ENCODE measurements at regions of chr12 and their contacts with region 1.

Region 1: GRCh38 chr12:111812881-111813741 is 28.9 kb upstream of the MAPKAPK5 start:
- DNase-seq: peak; percentile 82
- H3K4me3 Mint-ChIP-seq: no peak overlapping the region
- H3K27ac Mint-ChIP-seq: no peak overlapping the region
- H3K4me1 Mint-ChIP-seq: peaks cover 6% of the 10 kb centered on the region
- H3K27me3 Mint-ChIP-seq: no peaks in the 10 kb centered on the region

Region 2: GRCh38 chr12:110039085-110039807 is 1773.9 kb before region 1 on chr12:
- CTCF ChIA-PET with region 1: no interaction called
- intact Hi-C with region 1: no loop called
- DNase-seq: peak; percentile 69
- H3K4me3 Mint-ChIP-seq: no peak overlapping the region
- H3K27ac Mint-ChIP-seq: peak overlapping the region; percentile 89
- H3K4me1 Mint-ChIP-seq: peaks cover 38% of the 10 kb centered on the region
- H3K27me3 Mint-ChIP-seq: no peaks in the 10 kb centered on the region

Region 3: GRCh38 chr12:111330800-111331752 is 482.0 kb before region 1 on chr12:
- CTCF ChIA-PET with region 1: interaction called, 3 read pairs
- intact Hi-C with region 1: loop called (anchors 1 kb)
- DNase-seq: no peak
- H3K4me3 Mint-ChIP-seq: no peak overlapping the region
- H3K27ac Mint-ChIP-seq: no peak overlapping the region
- H3K4me1 Mint-ChIP-seq: peaks cover 3% of the 10 kb centered on the region
- H3K27me3 Mint-ChIP-seq: no peaks in the 10 kb centered on the region

Region 4: GRCh38 chr12:111685744-111686517 is 127.2 kb before region 1 on chr12 and contains the starts of genes ACAD10 and BRAP:
- CTCF ChIA-PET with region 1: interaction called, 7 read pairs
- intact Hi-C with region 1: loop called (anchors 1 kb)
- DNase-seq: peak; percentile 94
- H3K4me3 Mint-ChIP-seq: peak within 1 kb of the TSS; percentile 91
- H3K27ac Mint-ChIP-seq: peak within 1 kb of the TSS; percentile 86
- H3K4me1 Mint-ChIP-seq: peaks cover 33% of the 10 kb centered on the region
- H3K27me3 Mint-ChIP-seq: no peaks in the 10 kb centered on the region
- total RNA-seq, gene ACAD10: 19.0 to 21.7 TPM
- total RNA-seq, gene BRAP: 14.7 to 16.9 TPM

Region 5: DNA sequence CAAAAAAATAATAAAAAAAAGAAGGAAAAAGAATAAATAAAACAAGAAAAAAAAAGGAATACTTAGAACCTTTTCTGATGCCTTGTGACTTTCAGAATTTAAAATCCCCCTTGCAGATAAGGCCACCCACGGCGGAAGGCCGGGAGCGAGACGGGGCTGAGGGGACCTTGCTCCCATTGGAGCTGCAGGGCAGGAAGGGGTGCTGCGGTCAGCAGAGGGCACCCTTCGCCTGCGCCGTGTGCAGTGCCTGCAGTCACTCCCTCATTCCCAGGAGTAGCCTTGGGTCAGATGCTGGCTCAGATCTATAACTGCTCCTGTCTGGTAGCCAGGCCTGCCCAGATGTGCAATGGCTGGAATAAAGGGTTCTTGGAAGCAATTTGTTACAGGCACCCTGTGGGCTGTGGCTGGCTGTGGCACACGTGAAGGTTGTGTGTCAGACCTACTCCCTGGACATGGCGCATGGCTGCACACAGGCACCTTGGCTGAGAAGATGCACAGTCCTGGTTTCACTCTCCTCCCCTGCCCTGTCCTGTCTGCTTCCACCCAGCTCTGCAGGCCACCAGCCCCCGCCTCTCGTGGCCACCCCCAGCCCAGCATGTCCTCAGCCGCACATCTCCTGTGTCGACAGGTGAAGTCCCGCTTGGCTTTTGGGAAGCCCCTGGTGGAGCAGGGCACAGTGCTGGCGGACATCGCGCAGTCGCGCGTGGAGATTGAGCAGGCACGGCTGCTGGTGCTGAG is 59.8 kb before region 1 on chr12:
- CTCF ChIA-PET with region 1: interaction called, 13 read pairs
- intact Hi-C with region 1: loop called (anchors 1 kb)
- DNase-seq: no peak
- H3K4me3 Mint-ChIP-seq: no peak overlapping the region
- H3K27ac Mint-ChIP-seq: no peak overlapping the region
- H3K4me1 Mint-ChIP-seq: no peaks in the 10 kb centered on the region
- H3K27me3 Mint-ChIP-seq: no peaks in the 10 kb centered on the region

Region 6: DNA sequence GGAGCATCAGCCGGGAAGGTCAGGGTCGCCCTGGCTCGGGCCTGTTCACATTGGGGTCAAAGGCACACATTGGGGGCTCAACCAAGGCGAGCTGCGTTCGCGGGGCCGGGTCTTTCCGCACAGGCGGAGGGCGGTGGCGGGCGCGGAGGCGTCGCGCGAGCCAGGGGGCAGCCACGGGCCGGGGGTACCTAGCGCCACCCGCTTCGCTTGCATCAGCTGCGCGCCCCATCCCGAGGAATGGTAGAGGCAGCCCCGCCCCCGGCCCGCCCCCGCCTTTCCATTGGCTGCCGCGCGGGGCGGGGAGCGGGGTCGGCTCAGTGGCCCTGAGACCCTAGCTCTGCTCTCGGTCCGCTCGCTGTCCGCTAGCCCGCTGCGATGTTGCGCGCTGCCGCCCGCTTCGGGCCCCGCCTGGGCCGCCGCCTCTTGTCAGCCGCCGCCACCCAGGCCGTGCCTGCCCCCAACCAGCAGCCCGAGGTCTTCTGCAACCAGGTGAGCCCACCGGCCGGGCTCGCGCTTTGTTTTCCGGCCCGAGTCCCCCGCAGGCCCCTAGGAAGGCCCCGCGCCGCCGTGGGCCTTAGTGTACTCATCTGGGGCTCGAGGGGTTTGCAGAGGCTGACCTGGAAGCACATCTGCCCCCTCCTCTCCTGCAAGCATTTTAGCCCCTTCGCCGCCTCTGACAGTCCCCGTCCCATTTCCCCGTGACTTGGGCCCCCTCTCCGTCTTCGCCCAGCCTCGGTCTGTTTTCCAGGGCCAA is 46.3 kb before region 1 on chr12 and contains the start of gene ALDH2:
- CTCF ChIA-PET with region 1: interaction called, 13 read pairs
- intact Hi-C with region 1: loop called (anchors 1 kb)
- DNase-seq: peak; percentile 36
- H3K4me3 Mint-ChIP-seq: peak within 1 kb of the TSS; percentile 73
- H3K27ac Mint-ChIP-seq: no peak within 1 kb of the TSS
- H3K4me1 Mint-ChIP-seq: peaks cover 16% of the 10 kb centered on the region
- H3K27me3 Mint-ChIP-seq: peaks cover 41% of the 10 kb centered on the region
- total RNA-seq, gene ALDH2: 4.0 to 4.6 TPM

Region 7: DNA sequence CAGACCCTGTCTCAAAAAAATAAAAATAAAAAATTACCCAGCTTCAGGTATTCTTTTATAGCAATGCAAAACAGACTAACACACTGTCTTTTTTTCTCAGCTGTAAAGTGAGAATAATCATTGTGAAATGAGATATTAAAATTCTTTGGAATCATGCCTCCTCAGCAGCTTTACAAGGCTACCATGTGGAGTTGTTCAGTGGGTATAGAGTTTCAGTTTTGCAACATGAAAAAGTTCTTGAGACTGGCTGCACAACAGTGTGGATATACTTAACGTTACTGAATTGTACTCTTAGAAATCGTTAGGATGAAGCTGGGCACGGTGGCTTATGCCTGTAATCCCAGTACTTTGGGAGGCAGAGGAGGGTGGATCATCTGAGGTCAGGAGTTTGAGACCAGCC is 13.2 kb after region 1 on chr12:
- CTCF ChIA-PET with region 1: interaction called, 12 read pairs
- intact Hi-C with region 1: no loop called
- DNase-seq: no peak
- H3K4me3 Mint-ChIP-seq: no peak overlapping the region
- H3K27ac Mint-ChIP-seq: no peak overlapping the region
- H3K4me1 Mint-ChIP-seq: no peaks in the 10 kb centered on the region
- H3K27me3 Mint-ChIP-seq: peaks cover 9% of the 10 kb centered on the region

Measured in activated naive CD4-positive, alpha-beta T cell treated with anti-CD3 and anti-CD28 coated beads for 36 hours (primary cell).